HEK293 (cell line): ENCODE measurements at regions of chr17 and their contacts with region 1.

Region 1: DNA sequence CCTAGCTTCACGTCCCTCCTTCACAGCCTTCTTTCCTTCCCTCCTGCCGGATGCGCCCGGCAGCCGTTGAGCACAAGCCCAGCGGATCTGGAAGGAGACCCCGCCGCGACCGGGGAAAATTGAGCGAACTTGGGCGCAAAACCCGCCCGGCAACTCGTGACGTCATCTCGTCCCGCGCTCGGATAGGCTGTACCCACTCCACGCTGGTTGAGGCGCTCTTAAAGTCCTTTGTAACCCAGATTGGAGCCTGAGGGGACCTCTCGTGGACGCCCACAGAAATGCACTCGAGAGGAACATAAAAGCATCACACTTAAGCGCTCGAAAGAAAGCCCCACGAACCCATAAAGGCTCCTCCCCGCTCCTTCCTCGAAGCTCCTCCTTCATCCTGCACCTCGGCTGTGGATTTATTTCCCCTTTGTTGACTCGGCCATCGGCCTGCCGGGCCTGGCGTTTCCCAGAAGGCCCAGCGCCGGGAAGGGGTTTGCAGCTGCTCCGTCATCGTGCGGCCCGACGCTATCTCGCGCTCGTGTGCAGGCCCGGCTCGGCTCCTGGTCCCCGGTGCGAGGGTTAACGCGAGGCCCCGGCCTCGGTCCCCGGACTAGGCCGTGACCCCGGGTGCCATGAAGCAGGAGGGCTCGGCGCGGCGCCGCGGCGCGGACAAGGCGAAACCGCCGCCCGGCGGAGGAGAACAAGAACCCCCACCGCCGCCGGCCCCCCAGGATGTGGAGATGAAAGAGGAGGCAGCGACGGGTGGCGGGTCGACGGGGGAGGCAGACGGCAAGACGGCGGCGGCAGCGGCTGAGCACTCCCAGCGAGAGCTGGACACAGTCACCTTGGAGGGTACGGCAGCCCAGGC is at the start of gene PSMD3:
- H3K4me3 ChIP-seq: peak within 1 kb of the TSS; percentile 99
- H3K27ac ChIP-seq: peak within 1 kb of the TSS; percentile 88
- H3K4me1 ChIP-seq: no peaks in the 10 kb centered on the region; the same call in 1 of the 2 replicates
- CTCF ChIP-seq: peak; percentile 64; the same call in 1 of the 2 replicates

Region 2: DNA sequence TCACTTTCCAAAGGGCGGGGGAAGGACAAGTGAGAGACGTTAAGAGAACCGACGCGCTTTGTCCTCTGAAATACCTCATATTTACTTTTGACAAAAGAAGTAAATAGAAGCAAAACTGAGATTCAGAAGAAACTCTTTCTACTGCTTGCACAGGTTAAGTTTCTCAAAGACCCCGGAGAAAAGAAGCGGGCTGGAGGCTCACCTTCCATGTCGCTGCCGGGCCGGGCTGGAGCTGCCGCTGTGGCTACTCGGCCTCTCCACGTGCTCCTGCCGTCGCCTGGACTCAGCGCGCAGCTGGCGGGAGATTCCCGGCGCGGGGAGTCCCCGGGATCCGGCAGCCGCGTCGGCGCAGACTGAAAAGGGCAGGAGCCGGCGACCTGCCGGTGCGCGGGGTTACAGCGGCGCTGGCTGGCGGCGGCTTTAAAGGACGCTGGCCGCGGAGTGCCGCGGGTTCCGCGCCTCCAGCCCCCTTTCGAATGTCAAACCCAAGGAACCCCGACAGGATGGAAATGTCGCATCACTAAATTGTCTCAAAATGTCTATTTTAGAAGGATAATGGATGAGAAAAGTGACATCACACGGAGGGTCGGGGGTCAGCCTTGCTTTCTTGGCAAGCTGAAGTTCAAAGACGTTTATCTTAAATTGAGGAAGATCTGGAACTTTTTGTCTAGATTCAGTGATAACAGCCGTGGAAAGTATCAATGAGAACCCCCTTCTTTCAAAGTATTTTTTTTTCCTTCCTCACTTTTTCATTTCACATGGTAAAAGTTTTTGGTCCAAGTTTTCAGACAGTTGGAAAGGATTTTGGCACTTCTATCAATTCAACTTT is 116.4 kb before region 1 on chr17 and contains the start of gene IKZF3:
- CTCF ChIA-PET with region 1: no interaction called
- POLR2A ChIA-PET with region 1: no interaction called
- H3K4me3 ChIP-seq: no peak within 1 kb of the TSS
- H3K27ac ChIP-seq: no peak within 1 kb of the TSS
- H3K4me1 ChIP-seq: peaks cover 7% of the 10 kb centered on the region; the same call in 1 of the 2 replicates
- CTCF ChIP-seq: peak; percentile 78

Region 3: DNA sequence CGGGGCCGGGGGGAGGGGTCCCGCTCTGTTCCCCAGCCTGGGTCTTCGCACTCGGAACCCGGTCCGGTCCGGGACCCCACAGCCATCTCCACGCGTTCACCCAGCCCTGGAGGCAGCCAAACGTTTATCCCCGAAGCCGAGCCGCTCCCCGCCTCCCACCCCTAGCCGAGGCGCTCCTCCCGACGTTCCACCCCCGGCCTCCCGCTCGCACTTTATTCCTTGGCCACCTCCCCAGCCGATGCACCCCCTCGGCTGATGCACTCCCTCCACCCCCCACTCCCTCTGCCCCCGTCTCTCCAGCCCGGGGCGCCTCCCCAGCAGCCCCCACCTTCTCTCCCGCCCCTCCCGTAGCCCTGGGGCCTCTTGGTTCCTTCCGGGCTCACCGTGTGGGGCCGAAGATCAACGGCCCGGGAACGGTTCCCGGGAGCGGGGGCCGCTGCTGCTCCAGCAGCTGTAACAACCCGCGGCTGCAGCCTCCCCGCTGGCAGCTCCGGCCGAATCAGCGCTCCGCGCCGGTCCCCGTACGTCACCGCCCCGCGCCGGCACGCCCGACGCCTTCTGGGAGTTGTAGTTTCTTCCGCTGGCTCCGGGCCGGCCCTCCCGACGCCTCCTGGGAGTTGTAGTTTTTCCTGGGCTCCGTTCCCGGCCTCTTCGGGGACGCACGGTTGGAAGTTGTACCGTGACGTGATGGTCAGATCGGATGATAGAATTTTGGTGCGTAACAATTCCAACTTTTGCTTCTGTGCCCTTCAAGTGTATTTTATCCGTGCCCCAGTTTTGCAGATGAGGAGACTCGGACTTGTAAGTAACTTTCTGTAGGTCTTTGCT is 53.3 kb before region 1 on chr17 and contains the starts of genes LRRC3C and ORMDL3:
- CTCF ChIA-PET with region 1: interaction called, 6 read pairs
- POLR2A ChIA-PET with region 1: interaction called, 11 read pairs
- H3K4me3 ChIP-seq: peak within 1 kb of the TSS; percentile 92
- H3K27ac ChIP-seq: peak within 1 kb of the TSS; percentile 84
- H3K4me1 ChIP-seq: peaks cover 18% of the 10 kb centered on the region
- CTCF ChIP-seq: 0 out of 2 replicates have a peak, but pooled peaks have one; percentile 11

Region 4: DNA sequence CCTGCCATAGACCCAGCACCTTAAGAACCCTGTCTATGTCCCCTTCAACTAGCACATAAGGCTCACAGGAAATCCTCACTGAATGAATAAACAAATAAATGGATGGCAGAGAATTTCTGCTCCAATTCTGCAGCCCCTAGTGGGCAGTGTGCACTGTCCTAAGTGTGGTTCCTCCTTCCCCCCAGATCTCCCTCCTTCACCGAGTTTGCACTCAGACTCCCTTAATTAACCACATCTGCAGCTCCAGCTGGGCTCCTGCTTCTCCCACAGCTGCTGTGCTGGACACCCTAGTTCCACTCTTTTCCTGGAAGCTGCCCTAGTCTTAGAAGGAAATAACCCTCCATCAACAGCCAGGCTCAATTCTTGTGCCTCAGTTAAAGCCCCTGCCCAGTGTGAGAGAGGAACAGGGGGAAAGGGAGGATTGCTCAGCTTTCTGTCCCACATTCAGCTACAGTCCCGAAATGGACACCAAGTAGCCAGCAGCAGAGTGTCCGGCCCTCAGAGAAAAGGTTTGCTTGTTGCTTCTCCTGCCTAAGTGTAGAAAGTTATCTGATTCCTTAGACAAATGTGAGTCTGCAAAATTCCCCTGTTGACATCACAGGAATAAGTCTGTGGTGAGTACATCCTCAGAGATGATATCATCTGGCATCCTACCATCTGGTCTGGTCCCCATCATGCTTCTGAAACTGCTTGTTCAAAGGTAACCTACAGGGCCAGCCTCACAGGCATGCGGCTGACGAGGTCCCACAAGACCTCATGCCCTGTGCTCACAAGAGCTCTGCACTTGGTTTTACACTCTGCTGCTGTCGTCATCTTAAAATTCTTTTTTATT is 40.8 kb before region 1 on chr17:
- CTCF ChIA-PET with region 1: interaction called, 19 read pairs
- POLR2A ChIA-PET with region 1: no interaction called
- H3K4me3 ChIP-seq: no peak overlapping the region
- H3K27ac ChIP-seq: no peak overlapping the region
- H3K4me1 ChIP-seq: peaks cover 5% of the 10 kb centered on the region; the same call in 1 of the 2 replicates
- CTCF ChIP-seq: peak; percentile 77

Region 5: GRCh38 chr17:39952680-39953470 is 27.7 kb before region 1 on chr17:
- CTCF ChIA-PET with region 1: interaction called, 72 read pairs
- POLR2A ChIA-PET with region 1: interaction called, 41 read pairs
- H3K4me3 ChIP-seq: peak overlapping the region; percentile 31
- H3K27ac ChIP-seq: peak overlapping the region; percentile 70; the same call in 1 of the 2 replicates
- H3K4me1 ChIP-seq: peaks cover 3% of the 10 kb centered on the region
- CTCF ChIP-seq: no peak

Region 6: GRCh38 chr17:39963829-39964228 is 16.8 kb before region 1 on chr17:
- CTCF ChIA-PET with region 1: interaction called, 72 read pairs
- POLR2A ChIA-PET with region 1: interaction called, 26 read pairs
- H3K4me3 ChIP-seq: no peak overlapping the region
- H3K27ac ChIP-seq: no peak overlapping the region
- H3K4me1 ChIP-seq: peaks cover 2% of the 10 kb centered on the region
- CTCF ChIP-seq: no peak

Region 7: GRCh38 chr17:39996800-39997199 is 16.2 kb after region 1 on chr17:
- CTCF ChIA-PET with region 1: interaction called, 6 read pairs
- POLR2A ChIA-PET with region 1: interaction called, 13 read pairs
- H3K4me3 ChIP-seq: no peak overlapping the region
- H3K27ac ChIP-seq: 0 out of 2 replicates have a peak overlapping the region, but pooled peaks have one; percentile 46
- H3K4me1 ChIP-seq: no peaks in the 10 kb centered on the region
- CTCF ChIP-seq: no peak